HEK293T (cell line): ENCODE measurements at regions of chr17 and their contacts with region 1.

Region 1: DNA sequence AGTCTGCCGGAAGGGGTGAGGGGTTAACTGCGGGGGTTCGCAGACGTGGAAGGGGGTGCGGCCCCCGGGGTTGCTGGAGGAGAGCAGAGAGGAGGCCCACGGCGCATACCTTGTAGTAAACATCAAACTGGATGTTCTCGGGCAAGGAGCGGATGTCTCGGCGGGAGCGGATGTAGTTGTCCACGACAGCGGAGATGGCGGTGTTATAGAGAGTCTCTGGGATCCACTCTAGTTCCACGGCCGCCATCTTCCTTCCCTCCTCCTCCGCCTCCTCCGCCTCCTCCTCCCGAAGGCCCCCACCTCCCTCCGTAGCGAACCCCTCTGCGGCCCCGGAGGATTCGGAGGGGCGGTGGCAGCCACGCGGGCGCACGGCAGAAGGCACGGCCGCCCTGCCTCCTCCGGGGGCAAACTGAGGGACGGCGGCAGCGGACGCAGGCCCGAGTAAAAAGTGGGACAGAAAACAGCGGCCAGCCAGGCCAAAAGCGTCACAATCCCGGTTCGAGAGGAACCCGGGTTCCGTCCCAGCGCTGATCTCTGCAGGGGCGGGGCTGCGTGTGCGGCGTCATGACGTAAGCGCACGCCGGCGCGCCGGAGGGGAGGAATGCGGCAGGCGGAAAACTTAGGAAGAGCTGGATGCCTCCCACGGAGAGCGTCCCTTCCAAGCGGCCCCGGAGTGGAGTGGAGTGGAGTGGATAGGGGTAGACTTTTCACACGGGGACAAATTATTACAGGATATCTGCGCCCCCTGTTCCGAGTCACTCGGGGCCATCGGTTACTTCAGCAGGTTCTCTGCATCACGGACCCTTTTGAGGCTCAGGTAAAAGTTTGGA is at the start of gene APPBP2:
- DNase-seq: peak; percentile 91

Region 2: DNA sequence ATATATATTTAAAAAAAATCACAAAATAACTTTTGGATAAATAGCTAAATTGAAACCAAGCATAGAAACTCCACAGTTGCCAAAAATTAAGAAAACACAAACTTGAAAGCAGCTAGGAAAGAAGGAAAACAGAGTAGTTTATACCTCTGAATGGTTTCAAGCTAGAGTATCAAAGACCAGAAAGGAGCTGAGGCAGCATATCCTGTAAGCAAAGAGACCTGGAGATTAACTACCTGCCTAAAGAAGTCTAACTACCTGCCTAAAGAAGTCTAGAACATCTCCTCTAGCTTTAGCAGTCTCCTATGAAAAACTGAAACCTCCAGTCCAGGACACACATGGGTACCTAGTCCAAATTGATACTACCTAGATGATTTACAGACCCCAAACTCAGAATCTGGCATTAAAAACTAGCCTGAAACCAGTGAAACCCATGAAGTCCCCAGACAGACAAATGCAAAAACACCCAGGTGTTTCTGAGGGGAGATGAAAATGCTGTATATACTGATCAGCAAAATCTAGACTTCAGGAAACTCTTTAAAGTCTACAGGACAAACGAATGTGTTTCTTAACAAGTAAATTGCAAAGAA is 17.4 kb before region 1 on chr17:
- CTCF ChIA-PET with region 1: interaction called, 4 read pairs
- POLR2A ChIA-PET with region 1: interaction called, 10 read pairs
- DNase-seq: no peak

Region 3: GRCh38 chr17:60640503-60640902 is 114.6 kb after region 1 on chr17:
- CTCF ChIA-PET with region 1: interaction called, 11 read pairs
- POLR2A ChIA-PET with region 1: interaction called, 4 read pairs
- DNase-seq: no peak